ENCODE measurements at regions of chr10 and their contacts with region 1.

Region 1: DNA sequence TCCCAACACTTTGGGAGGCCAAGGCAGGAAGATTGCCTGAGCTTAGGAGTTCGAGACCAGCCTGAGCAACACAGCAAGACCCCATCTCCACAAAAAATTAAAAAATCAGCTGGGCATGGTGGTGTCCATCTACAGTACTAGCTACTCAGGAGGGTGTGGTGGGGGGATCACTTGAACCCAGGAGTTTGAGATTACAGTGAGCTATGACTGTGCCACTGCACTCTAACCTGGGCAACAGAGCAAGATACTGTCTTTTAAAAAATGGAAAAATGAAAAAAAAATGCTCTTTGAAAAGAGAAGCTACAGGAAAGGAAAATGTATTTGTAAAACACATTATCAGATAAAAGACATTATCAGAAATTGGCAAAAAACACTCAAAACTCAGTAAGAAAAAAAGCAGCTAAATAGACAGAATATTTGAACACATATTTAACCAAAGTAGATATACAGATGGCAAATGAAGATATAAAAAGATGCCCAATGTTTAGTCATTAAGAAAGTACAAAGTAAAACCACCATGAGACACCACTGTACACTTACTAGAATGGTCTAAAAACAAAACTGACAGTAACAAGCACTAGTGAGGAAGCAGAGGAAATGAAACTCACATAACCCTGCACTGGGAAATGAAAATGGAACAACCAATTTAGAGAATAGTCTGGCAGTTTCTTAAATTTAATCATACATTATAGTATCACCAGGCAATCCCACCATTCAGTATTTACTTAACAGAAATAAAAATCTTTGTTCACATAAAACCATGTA is 40.5 kb downstream of the NRBF2 start:
- DNase-seq: peak; percentile 18
- H3K4me3 Mint-ChIP-seq: no peak overlapping the region
- H3K27ac Mint-ChIP-seq: peak overlapping the region; percentile 71
- H3K4me1 Mint-ChIP-seq: peaks cover 62% of the 10 kb centered on the region
- H3K27me3 Mint-ChIP-seq: no peaks in the 10 kb centered on the region

Region 2: GRCh38 chr10:62760401-62760800 is 413.2 kb before region 1 on chr10:
- CTCF ChIA-PET with region 1: no interaction called
- intact Hi-C with region 1: no loop called
- DNase-seq: no peak
- H3K4me3 Mint-ChIP-seq: no peak overlapping the region
- H3K27ac Mint-ChIP-seq: no peak overlapping the region
- H3K4me1 Mint-ChIP-seq: peaks cover 24% of the 10 kb centered on the region
- H3K27me3 Mint-ChIP-seq: no peaks in the 10 kb centered on the region

Region 3: DNA sequence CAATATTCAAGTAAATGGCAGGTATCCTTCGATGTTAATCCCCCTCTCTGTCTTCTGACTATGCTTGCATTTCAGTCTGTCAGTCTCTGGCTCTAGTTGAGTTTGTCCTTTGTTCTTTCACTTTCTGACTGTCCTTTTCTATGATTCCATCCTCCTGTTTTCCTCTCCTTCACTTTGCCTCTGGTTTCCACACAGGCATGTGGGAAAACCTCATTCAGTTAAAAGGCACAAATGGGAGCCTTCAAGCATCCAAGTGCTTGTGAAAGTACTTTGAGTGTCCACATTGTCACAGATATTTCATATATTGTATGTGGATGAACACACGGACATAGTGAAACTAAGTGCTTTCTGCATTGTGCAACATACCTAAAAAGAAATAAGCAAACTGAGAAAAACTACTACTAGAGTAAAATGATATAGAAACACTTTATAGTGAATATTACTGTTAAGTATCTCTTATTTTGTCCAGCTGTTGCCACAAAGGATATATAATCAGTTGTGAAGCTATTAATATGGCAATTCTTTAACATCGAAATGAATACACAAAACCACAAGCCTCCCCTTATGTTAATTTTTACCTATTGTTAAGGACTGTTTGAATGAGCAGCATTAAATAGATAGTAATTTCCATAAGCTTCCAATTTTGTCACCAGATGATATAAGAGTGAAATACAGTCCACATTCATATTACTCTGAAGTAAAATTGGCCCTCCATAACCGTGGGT is 31.2 kb after region 1 on chr10:
- CTCF ChIA-PET with region 1: no interaction called
- intact Hi-C with region 1: loop called (anchors 2 kb)
- DNase-seq: no peak
- H3K4me3 Mint-ChIP-seq: no peak overlapping the region
- H3K27ac Mint-ChIP-seq: peak overlapping the region; percentile 22
- H3K4me1 Mint-ChIP-seq: peaks cover 29% of the 10 kb centered on the region
- H3K27me3 Mint-ChIP-seq: no peaks in the 10 kb centered on the region

Region 4: GRCh38 chr10:63227207-63227915 is 53.7 kb after region 1 on chr10:
- CTCF ChIA-PET with region 1: no interaction called
- intact Hi-C with region 1: loop called (anchors 1 kb)
- DNase-seq: no peak
- H3K4me3 Mint-ChIP-seq: no peak overlapping the region
- H3K27ac Mint-ChIP-seq: peak overlapping the region; percentile 97
- H3K4me1 Mint-ChIP-seq: peaks cover 56% of the 10 kb centered on the region
- H3K27me3 Mint-ChIP-seq: no peaks in the 10 kb centered on the region

Region 5: DNA sequence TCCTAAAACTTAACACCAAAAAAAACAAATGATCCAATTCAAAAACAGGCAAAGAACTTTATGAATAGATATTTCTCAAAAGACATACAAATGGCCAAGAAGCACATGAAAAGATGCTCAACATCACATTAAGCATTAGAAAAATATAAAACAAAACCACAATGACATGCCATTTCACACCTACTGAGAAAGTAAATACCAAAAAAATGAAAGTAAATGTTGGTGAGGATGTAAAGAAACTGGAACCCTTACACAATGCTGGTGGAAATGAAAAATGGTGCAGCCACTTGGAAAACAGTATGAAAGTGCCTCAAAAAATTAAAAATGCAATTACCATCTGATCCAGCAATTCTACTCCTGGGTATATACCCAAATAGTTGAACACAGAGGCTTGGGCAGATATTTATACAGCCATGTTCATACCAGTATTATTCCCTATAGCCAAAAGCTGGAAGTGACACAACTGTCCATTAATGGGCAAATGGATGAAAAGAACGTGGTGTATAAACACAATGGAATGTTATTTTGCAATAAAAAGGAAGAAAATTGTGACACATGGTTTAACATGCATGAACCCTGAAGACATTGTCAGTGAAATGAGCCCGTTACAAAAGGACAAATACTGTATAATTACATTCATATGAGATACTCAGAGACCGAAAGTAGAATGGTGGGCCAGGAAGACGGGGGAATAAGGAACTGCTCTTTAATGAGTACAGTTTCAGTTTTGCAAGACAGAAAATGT is 203.1 kb after region 1 on chr10:
- CTCF ChIA-PET with region 1: no interaction called
- intact Hi-C with region 1: no loop called
- DNase-seq: no peak
- H3K4me3 Mint-ChIP-seq: no peak overlapping the region
- H3K27ac Mint-ChIP-seq: no peak overlapping the region
- H3K4me1 Mint-ChIP-seq: peaks cover 14% of the 10 kb centered on the region
- H3K27me3 Mint-ChIP-seq: no peaks in the 10 kb centered on the region

Region 6: GRCh38 chr10:63614371-63614891 is 440.8 kb after region 1 on chr10:
- CTCF ChIA-PET with region 1: interaction called, 3 read pairs
- intact Hi-C with region 1: loop called (anchors 5 kb)
- DNase-seq: no peak
- H3K4me3 Mint-ChIP-seq: no peak overlapping the region
- H3K27ac Mint-ChIP-seq: no peak overlapping the region
- H3K4me1 Mint-ChIP-seq: peaks cover 14% of the 10 kb centered on the region
- H3K27me3 Mint-ChIP-seq: no peaks in the 10 kb centered on the region